ENCODE measurements at regions of chr3 and their contacts with region 1.

Region 1: GRCh38 chr3:73624821-73625665 is at the start of gene PDZRN3:
- DNase-seq: peak; percentile 77
- ATAC-seq: peak; percentile 55 to 75
- total RNA-seq, gene PDZRN3: 30.8 to 60.6 TPM

Region 2: DNA sequence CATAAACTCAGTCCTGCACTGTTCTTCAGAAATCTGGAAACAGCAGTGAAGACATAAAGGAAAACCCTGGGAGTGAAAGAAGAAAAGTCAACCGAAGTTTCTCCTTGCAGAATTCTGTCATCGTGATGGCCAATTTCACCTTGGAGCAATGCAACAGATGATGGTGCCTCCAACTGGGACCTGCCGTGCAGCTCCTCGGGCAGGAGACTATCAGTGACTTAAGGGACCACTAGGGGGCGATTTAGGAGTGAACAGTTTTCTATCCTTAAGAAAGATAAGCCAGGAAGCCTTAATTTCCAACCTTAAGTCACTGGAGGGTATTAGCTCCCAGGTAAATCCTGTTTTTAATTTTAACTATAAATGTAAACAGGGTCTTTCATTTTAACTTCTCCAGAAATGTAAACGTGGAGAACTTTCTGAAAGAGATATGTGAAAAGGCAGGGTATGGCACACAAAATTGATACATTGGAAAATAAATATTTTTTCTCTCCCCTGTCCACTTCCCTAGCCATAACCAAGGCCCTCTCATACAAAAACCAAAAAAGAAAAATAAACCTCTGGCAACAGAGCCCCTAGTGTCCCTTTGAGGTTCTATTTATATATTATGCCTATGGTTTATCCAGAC is 116.6 kb before region 1 on chr3:
- intact Hi-C with region 1: loop called (anchors 5 to 10 kb)
- DNase-seq: peak; percentile 42
- ATAC-seq: peak; percentile 69 to 74

Region 3: GRCh38 chr3:73542136-73542535 is 82.9 kb before region 1 on chr3:
- intact Hi-C with region 1: no loop called
- DNase-seq: no peak
- ATAC-seq: no peak

Region 4: DNA sequence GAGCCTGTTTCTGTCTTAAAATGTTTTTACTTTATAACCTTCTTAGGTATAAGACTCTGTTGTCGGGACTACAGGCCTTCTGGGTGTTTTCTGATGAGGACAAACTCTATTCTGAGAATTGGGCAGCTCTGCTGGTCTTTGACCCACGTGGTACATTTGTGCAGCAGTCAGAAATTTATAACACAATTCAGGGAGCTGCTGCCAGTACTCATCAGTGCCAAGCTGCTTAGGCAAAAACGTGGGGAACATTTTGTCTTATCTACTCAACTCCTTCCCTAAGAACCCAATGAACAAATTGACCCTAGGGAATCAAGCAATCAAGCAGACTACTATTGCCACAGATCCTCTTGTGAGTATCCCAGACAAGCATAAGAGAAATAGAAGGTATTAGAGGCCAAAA is 180.4 kb after region 1 on chr3:
- intact Hi-C with region 1: loop called in 1 of 2 experiments (anchors 10 kb)
- DNase-seq: peak; percentile 66
- ATAC-seq: peak; percentile 91 to 97

Region 5: DNA sequence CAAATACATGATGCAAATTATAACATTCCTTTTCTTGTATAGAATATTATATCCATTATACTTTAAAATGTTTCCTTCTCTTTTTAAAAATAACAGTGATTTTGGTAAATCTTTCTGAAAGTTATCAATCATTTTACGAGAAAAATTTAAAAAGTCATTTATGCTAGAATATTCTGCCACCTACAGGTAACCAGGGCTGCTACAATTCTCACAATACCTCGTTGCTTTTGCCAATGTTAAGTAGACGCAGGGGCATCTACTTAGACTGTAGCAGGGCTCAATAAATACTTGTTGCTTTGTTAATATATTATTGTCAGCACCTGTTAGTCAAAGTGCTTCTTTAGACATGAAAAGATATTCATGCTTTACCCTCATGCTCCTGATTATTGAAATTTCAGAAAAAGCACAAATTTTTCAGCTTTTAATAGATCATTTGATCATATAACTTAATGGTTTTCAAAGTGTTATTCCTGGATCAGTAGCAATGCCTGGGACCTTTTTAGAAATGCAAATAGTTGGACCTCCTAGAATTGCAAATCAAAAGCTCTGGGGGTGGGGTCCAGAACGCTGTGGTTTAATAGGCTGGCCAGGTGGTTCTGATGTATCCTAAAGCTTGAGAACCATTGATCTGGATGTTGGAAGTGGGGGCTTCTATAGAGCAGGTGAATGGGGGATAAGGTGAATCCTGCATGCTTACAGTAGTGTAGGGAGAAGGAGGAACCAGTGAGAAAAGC is 223.3 kb after region 1 on chr3:
- intact Hi-C with region 1: loop called in 1 of 2 experiments (anchors 10 kb)
- DNase-seq: no peak
- ATAC-seq: peak in 1 of 2 donors; percentile 65

Measured in left cardiac atrium (tissue), 4 donors.